Endothelial cell of umbilical vein (primary cell): ENCODE measurements at regions of chr15 and their contacts with region 1.

Region 1: GRCh38 chr15:68672781-68673205 is 94.0 kb downstream of the CORO2B start:
- DNase-seq: no peak
- H3K4me3 ChIP-seq: no peak overlapping the region
- H3K27ac ChIP-seq: no peak overlapping the region
- H3K4me1 ChIP-seq: no peaks in the 10 kb centered on the region
- H3K27me3 ChIP-seq: peaks cover 0 to 10% of the 10 kb centered on the region in 2 experiments
- CTCF ChIP-seq: peak in 1 of 2 donors; percentile 30
- POLR2A ChIP-seq: no peak

Region 2: DNA sequence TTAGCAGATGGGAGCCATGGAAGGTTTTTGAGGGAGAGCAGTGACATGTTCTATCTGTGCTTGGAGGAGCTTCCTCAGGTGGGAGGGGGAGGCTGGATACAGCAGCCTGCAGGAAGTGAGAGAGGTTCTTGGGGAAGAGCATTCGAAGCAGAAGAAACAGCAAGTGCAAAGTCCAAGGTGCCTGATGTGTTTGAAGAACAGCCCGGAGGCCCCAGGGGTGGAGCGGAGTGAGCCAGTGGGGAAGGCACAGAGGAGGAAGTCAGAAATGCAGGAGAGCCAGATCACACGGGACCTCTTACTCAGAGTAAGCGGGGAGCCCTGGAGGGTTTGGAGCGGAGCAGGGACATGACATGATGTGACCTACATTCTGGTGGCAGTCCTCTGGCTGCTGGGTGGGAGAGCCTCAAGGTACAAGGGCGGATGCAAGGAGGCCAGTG is 251.7 kb before region 1 on chr15:
- CTCF ChIA-PET with region 1: no interaction called
- POLR2A ChIA-PET with region 1: no interaction called
- dilution Hi-C with region 1: no loop called
- intact Hi-C with region 1: no loop called
- DNase-seq: no peak
- H3K4me3 ChIP-seq: no peak overlapping the region
- H3K27ac ChIP-seq: no peak overlapping the region
- H3K4me1 ChIP-seq: no peaks in the 10 kb centered on the region
- H3K27me3 ChIP-seq: peaks cover 0 to 4% of the 10 kb centered on the region in 2 experiments
- CTCF ChIP-seq: no peak
- POLR2A ChIP-seq: no peak

Region 3: GRCh38 chr15:68559345-68560310 is 113.2 kb before region 1 on chr15:
- CTCF ChIA-PET with region 1: interaction called, 728 read pairs
- POLR2A ChIA-PET with region 1: no interaction called
- dilution Hi-C with region 1: no loop called
- intact Hi-C with region 1: loop called (anchors 1 kb)
- DNase-seq: peak; percentile 78
- H3K4me3 ChIP-seq: peak overlapping the region in 2 of 3 experiments; percentile 19 to 46
- H3K27ac ChIP-seq: no peak overlapping the region
- H3K4me1 ChIP-seq: peaks cover 4% of the 10 kb centered on the region
- H3K27me3 ChIP-seq: peaks cover 4 to 7% of the 10 kb centered on the region in 2 experiments
- CTCF ChIP-seq: peak; percentile 98 to 99
- POLR2A ChIP-seq: no peak

Region 4: DNA sequence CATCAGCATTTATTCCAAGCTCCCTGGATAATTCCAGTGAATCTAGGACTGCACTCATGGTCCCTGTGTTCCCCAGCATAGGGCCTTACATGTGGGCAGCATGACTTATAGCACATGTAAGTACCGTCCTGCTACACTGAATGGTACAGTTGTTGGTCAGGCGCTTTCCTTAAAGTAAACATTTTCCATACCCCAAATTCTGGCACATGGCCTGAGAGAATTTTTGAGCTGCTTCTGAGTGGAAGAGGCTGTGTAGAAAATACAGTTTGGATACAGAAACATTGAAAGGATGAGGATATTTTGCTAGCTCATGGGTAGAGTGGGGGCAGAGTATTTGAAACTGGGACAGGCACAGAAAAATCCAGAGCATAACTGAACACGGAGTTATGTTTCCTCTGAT is 66.4 kb before region 1 on chr15:
- CTCF ChIA-PET with region 1: interaction called, 11 read pairs
- POLR2A ChIA-PET with region 1: no interaction called
- dilution Hi-C with region 1: no loop called
- intact Hi-C with region 1: no loop called
- DNase-seq: no peak
- H3K4me3 ChIP-seq: no peak overlapping the region
- H3K27ac ChIP-seq: no peak overlapping the region
- H3K4me1 ChIP-seq: peaks cover 6% of the 10 kb centered on the region
- H3K27me3 ChIP-seq: no peaks in the 10 kb centered on the region
- CTCF ChIP-seq: no peak
- POLR2A ChIP-seq: no peak

Region 5: DNA sequence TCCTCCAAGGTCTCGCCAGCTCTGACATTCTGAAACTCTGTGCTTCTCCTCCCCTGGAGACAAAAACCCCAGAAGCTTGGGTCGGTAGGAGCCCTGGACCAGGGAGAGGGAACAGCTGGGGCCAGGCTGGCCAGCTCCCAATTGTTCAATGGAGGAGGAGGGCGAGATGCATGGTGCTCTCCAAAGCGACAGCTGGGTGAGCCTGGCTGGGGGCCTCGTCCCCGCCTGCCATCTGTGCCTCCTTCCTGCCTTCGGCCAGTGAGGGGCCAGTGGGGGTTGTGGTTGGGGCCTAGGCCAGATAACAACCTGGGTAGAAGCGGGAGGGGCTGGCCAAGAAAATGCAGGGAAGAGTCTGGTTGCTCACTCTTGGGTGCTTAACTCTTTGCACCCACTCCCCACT is 14.6 kb before region 1 on chr15:
- CTCF ChIA-PET with region 1: interaction called, 54 read pairs
- POLR2A ChIA-PET with region 1: no interaction called
- dilution Hi-C with region 1: no loop called
- intact Hi-C with region 1: no loop called
- DNase-seq: no peak
- H3K4me3 ChIP-seq: no peak overlapping the region
- H3K27ac ChIP-seq: no peak overlapping the region
- H3K4me1 ChIP-seq: no peaks in the 10 kb centered on the region
- H3K27me3 ChIP-seq: peaks cover 0 to 3% of the 10 kb centered on the region in 2 experiments
- CTCF ChIP-seq: no peak
- POLR2A ChIP-seq: no peak

Region 6: DNA sequence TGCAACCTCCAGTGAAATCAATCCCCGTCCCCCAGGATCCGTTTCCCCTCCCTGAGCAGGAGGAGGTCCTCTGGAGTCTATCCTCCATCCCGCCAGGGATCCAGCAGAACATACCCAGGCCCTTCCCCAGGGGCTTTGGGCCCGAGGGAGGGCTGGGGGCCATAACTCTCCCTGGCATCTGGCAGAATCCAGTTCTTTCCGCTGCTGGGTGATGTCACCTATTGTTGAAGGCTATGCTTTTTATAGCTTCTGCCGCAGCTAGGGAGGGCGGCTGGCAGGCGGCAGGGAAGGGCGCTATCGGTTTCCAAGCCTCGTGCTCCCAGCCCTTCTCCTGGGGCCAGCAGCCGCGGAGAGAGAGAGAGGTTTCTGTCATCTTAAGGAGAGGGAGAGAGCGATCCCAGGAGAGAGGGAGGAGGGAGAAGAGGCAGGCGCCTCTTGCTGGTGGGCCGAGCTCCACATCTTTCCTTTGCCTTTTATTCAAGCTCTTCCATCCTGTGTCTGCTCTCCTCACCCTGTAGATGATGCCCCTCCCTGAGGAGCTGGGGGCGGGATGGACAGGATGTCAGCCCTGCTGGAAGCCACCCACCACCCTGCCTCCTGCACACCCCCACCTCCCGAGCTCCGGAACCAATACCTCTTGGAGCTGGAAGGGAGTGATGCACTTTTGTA is 27.8 kb after region 1 on chr15:
- CTCF ChIA-PET with region 1: interaction called, 13 read pairs
- POLR2A ChIA-PET with region 1: no interaction called
- dilution Hi-C with region 1: no loop called
- intact Hi-C with region 1: no loop called
- DNase-seq: peak; percentile 83
- H3K4me3 ChIP-seq: no peak overlapping the region
- H3K27ac ChIP-seq: no peak overlapping the region
- H3K4me1 ChIP-seq: peaks cover 24% of the 10 kb centered on the region
- H3K27me3 ChIP-seq: no peaks in the 10 kb centered on the region
- CTCF ChIP-seq: no peak
- POLR2A ChIP-seq: no peak

Region 7: GRCh38 chr15:68924866-68925560 is 252.2 kb after region 1 on chr15:
- CTCF ChIA-PET with region 1: interaction called, 33 read pairs
- POLR2A ChIA-PET with region 1: no interaction called
- dilution Hi-C with region 1: no loop called
- intact Hi-C with region 1: no loop called
- DNase-seq: peak; percentile 75
- H3K4me3 ChIP-seq: no peak overlapping the region
- H3K27ac ChIP-seq: no peak overlapping the region
- H3K4me1 ChIP-seq: no peaks in the 10 kb centered on the region
- H3K27me3 ChIP-seq: peaks cover 5 to 37% of the 10 kb centered on the region in 2 experiments
- CTCF ChIP-seq: peak; percentile 72 to 78
- POLR2A ChIP-seq: no peak